ENCODE measurements at regions of chr16 and their contacts with region 1.

Region 1: DNA sequence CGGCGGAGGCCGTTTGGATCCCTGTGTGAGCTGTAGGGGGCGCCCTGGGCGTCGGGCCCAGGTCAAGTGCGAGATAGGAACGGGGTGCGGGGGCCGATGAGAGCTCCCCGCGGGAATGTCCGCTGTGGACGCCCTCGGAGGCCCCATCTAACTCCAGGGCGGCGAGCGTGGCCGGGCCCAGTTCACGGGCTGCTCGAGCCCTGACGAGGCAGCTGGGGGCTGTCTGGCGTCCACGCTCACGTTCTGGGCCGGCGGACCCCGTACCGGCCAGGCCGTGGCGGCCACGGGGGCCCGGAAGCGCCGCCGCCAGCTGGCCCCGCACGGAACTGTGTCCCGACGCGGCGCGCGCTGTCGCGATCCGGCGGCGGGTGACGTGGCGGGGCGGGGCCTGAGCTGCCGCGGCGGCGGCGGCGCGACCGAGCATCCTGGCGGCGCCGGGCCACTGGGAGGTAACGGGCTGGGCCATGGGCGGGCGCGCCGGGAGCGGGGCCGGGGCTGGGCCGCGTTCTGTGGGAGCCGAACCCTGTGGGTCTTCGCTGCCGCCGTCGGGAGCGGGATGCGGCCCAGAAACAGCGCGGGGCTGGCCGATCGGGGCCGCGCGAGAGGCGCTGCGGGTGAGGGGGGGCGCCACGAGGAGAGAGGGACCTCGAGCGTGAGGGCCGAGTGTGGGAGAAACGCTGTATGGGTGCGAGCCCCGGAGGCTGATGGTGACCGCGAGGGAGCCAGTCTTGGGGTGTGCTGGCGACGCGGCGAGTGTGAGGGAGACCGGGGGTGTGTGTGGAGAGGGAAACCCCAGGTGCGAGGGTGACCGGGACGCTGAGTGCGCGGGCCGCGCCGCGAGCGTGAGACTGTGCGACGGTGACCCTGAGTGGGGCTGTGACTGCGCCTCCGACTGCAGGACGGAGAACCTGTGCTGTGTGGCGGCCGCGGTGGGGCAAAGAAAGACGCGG is at the start of gene SLC7A6:
- DNase-seq: peak; percentile 82
- H3K4me3 ChIP-seq: peak within 1 kb of the TSS; percentile 83
- H3K27ac ChIP-seq: peak within 1 kb of the TSS; percentile 91
- H3K4me1 ChIP-seq: peaks cover 6% of the 10 kb centered on the region
- H3K27me3 ChIP-seq: no peaks in the 10 kb centered on the region
- CTCF ChIP-seq: peak; percentile 65
- total RNA-seq, gene SLC7A6: 22.0 to 42.2 TPM

Region 2: GRCh38 chr16:68310761-68311511 is 46.5 kb after region 1 on chr16 and contains the starts of genes PRMT7 and SLC7A6OS:
- intact Hi-C with region 1: loop called (anchors 5 kb)
- DNase-seq: peak; percentile 96
- H3K4me3 ChIP-seq: peak within 1 kb of the TSS; percentile 89
- H3K27ac ChIP-seq: peak within 1 kb of the TSS; percentile 82
- H3K4me1 ChIP-seq: peaks cover 16% of the 10 kb centered on the region
- H3K27me3 ChIP-seq: no peaks in the 10 kb centered on the region
- CTCF ChIP-seq: no peak
- total RNA-seq, gene PRMT7: 18.0 to 45.4 TPM
- total RNA-seq, gene SLC7A6OS: 15.2 to 16.6 TPM

Region 3: GRCh38 chr16:68328151-68328859 is 63.9 kb after region 1 on chr16:
- intact Hi-C with region 1: loop called (anchors 2 kb)
- DNase-seq: peak; percentile 82
- H3K4me3 ChIP-seq: no peak overlapping the region
- H3K27ac ChIP-seq: no peak overlapping the region
- H3K4me1 ChIP-seq: peaks cover 5% of the 10 kb centered on the region
- H3K27me3 ChIP-seq: no peaks in the 10 kb centered on the region
- CTCF ChIP-seq: peak; percentile 93

Measured in colonic mucosa (tissue), 4 donors.